ENCODE measurements at regions of chr9 and their contacts with region 1.

Region 1: DNA sequence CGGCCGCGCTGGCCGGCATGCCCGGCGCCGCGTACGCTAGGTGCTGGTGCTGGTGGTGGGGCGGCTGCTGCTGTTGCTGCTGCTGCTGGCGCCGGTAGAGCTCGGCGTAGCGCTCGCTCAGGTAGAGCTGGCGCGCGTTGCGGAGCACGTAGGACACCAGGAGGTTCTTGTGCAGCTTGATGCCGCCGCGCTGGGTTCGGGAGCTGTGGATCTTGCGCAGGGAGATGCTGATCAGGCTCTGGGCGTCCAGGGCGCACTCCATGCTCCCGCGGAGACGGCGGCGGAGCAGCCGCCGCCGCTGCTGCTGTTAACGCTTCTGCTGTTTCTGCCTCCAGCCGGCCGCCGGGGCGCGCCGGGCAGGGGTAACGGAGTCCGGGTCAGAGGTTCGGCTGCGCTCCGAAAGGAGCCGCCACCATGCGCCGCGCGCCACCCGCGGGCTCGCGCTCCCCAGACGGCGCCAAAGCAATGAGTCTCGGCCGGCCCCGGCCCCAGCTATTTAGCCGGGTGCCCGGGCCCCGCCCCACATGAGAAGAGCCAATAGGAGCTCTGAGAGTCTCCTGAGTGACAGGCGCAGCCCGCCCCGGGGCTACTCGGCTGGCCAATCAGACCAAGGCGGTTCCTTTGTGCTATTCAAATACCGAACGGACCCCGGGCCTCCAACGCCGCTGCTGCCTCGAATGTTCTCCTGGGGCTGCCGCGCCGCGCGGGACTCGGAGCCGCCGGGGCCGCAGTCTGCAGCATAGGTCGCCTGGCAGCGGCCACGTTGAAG is at the start of gene IER5L:
- H3K4me3 ChIP-seq: peak within 1 kb of the TSS; percentile 64
- H3K27ac ChIP-seq: peak within 1 kb of the TSS; percentile 65; the same call in 1 of the 2 replicates
- H3K4me1 ChIP-seq: peaks cover 7% of the 10 kb centered on the region
- CTCF ChIP-seq: peak; percentile 73

Region 2: DNA sequence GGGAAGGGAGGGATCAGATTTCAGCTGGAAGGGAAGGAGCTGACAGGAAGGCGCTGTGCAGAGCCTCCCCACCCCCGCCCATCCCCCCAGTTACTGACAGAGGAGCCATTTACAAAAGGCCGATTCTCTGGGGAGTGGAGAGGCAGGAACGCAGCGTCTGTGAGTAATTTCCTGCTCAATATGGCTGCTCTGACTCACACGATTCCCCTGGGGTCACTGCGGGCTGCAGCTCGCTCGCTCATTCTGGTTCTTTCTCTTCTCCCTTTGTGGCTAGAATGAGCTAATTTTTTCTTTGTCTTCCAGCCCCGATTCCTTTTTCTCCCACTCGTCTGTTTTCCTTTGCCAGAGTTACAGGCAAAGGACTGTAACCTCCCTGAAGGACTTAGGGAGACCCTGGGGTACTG is 38.0 kb before region 1 on chr9:
- CTCF ChIA-PET with region 1: interaction called, 104 read pairs
- POLR2A ChIA-PET with region 1: interaction called, 42 read pairs
- H3K4me3 ChIP-seq: peak overlapping the region; percentile 12
- H3K27ac ChIP-seq: peak overlapping the region; percentile 100
- H3K4me1 ChIP-seq: peaks cover 13% of the 10 kb centered on the region
- CTCF ChIP-seq: no peak

Region 3: GRCh38 chr9:129191234-129191633 is 13.3 kb after region 1 on chr9:
- CTCF ChIA-PET with region 1: interaction called, 7 read pairs
- POLR2A ChIA-PET with region 1: interaction called, 19 read pairs
- H3K4me3 ChIP-seq: no peak overlapping the region
- H3K27ac ChIP-seq: no peak overlapping the region
- H3K4me1 ChIP-seq: no peaks in the 10 kb centered on the region
- CTCF ChIP-seq: no peak

Region 4: DNA sequence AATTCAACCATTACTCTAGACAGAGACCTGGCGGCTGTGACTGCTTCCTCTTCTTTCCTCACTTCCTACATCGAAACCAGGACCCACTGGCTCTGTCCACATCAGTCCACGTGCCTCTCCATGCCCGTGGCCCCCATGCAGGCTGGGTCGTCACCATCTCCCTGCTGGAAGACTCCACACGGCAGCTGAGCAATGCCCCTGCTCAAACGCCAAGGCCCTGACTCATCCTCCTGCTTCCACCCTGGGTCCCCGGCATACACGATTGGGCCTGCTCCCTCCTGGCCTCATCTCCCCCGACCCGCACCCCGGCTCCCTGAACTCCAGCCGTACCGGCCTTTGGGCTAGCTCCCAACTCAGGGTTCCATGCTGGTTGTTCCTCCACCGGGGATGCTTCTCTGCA is 67.3 kb after region 1 on chr9:
- CTCF ChIA-PET with region 1: interaction called, 3 read pairs
- POLR2A ChIA-PET with region 1: interaction called, 10 read pairs
- H3K4me3 ChIP-seq: no peak overlapping the region
- H3K27ac ChIP-seq: no peak overlapping the region
- H3K4me1 ChIP-seq: no peaks in the 10 kb centered on the region
- CTCF ChIP-seq: no peak

Region 5: DNA sequence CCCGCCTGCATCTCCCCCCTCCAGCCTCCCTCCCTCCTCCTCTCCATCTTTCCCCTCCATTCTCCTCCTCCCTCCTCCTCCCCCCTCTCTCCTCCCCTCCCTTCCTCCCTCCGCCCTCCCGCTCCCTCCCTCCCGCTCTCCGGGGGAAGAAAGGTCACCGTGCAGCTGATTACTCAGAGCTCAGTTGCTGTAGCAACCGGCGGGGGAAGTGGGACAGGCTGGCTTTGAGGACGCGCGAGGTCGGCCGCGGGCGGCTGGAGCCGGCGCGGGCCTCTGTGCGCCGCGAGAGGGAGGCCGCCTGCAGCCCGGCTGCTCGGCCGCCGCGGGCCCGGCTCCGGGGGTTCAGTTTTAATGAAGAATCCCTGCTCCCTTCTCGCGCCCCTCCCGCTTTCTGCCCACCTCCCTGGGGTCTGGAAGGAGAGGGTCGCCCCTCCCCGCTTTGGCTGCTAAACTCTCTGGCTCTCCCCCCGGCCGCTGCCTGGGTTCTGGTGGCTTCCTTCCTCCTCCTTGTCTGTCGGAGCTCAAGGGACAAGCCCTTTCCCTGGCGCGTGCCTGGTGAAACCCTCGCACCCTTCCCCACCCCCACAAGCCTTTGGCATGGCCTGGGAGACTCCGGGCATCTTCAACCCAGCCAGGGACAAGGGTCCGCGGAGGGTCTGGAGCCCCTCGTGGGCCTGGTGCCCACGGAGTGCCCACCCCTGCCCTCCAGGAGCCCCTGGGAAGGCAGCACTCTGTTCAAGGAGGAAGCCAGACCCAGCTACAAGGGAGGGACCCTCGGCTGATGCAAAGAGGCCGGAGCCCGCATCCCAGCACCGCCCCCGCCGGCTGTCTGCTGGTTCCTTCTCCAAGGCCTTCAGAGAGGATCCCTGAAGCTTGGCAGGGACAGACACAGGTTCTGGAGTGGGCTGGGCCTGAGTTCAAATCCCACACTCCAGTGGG is 282.6 kb after region 1 on chr9:
- CTCF ChIA-PET with region 1: no interaction called
- POLR2A ChIA-PET with region 1: interaction called, 21 read pairs
- H3K4me3 ChIP-seq: peak overlapping the region; percentile 36
- H3K27ac ChIP-seq: peak overlapping the region; percentile 88
- H3K4me1 ChIP-seq: peaks cover 20% of the 10 kb centered on the region
- CTCF ChIP-seq: no peak

Region 6: GRCh38 chr9:129495534-129496325 is 317.8 kb after region 1 on chr9:
- CTCF ChIA-PET with region 1: interaction called, 9 read pairs
- POLR2A ChIA-PET with region 1: interaction called, 22 read pairs
- H3K4me3 ChIP-seq: peak overlapping the region; percentile 25
- H3K27ac ChIP-seq: peak overlapping the region; percentile 87
- H3K4me1 ChIP-seq: 0 out of 2 replicates have a peak, but pooled peaks cover 2% of the 10 kb centered on the region
- CTCF ChIP-seq: no peak

Region 7: DNA sequence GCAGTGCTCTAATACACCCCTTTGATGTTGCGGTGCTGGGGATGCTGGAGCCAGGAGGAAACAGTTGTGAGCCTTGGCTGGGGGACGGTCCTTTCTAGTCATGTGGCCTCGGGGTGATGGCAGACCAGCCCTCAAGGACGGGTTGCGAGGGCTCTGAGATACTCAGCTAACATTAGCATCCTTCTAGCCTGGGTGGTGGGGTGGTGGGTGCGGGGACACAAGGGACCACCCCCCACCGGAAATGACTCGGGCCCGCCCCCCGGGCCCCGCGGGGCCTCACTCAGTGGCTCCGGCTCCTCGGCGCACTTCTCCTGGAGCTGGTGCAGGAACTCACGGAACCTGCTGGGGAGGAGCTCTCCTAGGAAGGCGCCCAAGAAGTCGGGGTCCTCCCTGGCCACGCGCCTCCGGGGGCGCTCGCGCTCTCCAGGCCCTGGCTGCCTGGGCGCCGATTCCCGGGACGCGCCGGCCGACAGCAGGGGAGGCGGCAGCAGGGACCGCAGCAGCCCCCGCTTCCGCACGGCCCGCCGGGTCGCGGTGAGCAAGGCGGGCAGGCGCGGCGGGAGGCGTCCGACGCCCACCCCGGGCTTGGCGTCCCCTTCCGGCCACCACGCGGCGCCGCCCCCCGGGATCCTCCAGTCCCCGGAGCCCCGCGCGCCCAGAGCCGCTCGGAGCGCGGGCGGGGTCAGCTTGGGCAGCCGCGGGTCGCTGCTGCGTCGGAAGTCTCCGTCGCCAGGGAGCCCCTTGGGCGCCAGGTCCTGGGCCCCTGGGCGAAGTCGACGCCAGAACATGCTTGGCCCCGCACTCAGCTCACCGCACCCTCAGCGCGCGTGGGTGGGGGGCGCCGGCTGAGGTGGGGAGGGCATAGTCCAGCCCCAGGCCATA is 442.1 kb after region 1 on chr9:
- CTCF ChIA-PET with region 1: interaction called, 7 read pairs
- POLR2A ChIA-PET with region 1: interaction called, 10 read pairs
- H3K4me3 ChIP-seq: peak overlapping the region; percentile 36
- H3K27ac ChIP-seq: peak overlapping the region; percentile 51; the same call in 1 of the 2 replicates
- H3K4me1 ChIP-seq: no peaks in the 10 kb centered on the region; the same call in 1 of the 2 replicates
- CTCF ChIP-seq: peak; percentile 67